ENCODE measurements at regions of chr1 and their contacts with region 1.

Region 1: DNA sequence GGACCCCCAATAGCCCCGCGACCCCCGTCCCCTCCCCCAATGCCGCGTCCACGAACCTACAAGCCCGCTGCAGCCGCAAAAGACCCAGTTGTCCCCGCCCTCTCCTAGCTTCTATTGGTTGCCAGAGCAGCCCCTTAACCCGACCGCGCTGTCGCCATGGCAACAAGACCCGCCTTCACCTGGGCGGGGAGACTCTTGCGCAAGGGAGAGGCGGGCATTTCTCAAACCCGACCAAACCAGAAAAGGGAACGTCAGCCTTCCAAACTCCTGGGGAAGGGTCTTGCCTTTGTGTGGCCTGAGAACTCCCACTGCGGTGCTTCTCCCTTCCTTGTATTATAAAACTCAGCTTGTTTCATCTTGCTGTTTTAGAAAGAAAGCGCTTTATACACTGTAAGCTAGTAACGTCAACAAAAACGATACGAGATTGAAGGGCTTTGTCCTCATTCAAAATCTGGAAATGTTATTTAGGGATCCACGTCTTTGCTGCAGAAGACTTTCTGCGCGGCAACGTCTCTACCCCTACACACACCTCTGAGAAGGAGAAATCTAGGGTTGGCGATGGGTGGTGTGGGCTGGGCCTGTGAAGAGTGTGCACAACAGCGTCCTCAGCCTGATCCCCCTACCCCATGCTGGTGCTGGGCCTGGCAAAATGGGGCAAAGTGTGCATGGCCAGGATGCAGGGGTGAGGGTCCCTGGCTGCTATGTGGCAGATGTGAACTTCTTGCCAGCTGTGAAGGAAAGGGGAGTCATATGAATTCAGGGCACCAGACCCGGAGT is at the start of gene TMEM9:
- DNase-seq: peak; percentile 94 to 99 (median 98)
- H3K4me3 ChIP-seq: peak within 1 kb of the TSS; percentile 55 to 98 (median 90)
- H3K27ac ChIP-seq: peak within 1 kb of the TSS in 45 of 59 donors; percentile 9 to 85 (median 62)
- H3K27me3 ChIP-seq: no peaks in the 10 kb centered on the region
- CTCF ChIP-seq: peak in 5 of 56 donors; percentile 11 to 24 (median 17)
- total RNA-seq, gene TMEM9: 57.9 to 136 (median 90.5) TPM

Region 2: DNA sequence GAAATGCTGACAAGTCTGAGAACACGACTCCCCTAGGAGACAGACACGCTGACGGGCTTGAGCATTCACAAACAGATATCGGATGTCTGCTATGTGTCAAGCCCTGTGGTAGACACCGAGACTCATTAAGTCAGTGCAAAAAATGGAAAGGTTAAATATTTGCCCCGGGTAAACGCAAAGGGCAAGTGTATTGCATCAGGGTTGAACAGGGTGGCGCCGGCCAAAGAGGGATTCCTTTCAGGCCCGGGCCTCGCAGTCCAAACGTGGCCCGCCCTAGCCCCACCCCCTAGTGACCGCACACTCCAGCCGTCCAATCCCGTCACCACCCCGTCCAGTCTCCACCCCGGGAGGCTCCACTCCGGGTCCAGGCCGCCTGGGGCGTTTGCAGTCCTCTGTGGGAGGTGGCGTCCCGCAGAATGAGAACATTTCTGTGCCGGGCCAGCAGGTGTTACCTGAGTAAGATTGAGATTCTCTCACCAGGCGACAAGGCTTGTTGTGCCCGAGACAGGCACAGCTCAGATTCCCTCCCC is 16.0 kb after region 1 on chr1:
- intact Hi-C with region 1: loop called (anchors 2 kb)
- DNase-seq: peak; percentile 86 to 96 (median 92)
- H3K4me3 ChIP-seq: peak overlapping the region; percentile 59 to 98 (median 80)
- H3K27ac ChIP-seq: peak overlapping the region in 58 of 59 donors; percentile 2 to 94 (median 83)
- H3K27me3 ChIP-seq: no peaks in the 10 kb centered on the region
- CTCF ChIP-seq: peak in 21 of 56 donors; percentile 13 to 60 (median 28)